ENCODE measurements at regions of chr19 and their contacts with region 1.

Region 1: DNA sequence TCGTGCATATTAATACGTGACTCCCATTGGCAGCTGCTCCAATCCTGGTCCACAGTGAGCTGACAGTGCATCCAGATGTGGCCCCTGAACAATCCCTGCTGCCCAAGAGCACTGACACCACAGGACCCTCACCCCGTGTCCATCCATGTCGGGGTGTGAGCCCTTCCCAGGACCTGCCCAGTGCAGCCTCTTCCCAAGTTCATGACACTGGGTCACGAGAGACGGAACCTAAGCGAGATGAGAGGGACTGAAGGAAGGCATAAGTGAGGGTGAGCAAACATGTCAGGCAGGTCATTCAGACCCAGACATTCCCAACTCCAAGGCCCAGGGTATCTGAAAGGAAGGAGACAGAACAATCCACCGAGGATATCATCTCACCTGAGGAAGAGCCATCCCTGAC is 3.5 kb downstream of the ZNF468 start:
- DNase-seq: no peak
- H3K4me3 ChIP-seq: no peak overlapping the region
- H3K27ac ChIP-seq: no peak overlapping the region
- H3K4me1 ChIP-seq: peaks cover 3% of the 10 kb centered on the region
- H3K27me3 ChIP-seq: no peaks in the 10 kb centered on the region
- CTCF ChIP-seq: no peak
- POLR2A ChIP-seq: no peak

Region 2: GRCh38 chr19:52554216-52554971 is 299.5 kb before region 1 on chr19:
- CTCF ChIA-PET with region 1: no interaction called
- POLR2A ChIA-PET with region 1: no interaction called
- dilution Hi-C with region 1: no loop called
- intact Hi-C with region 1: no loop called
- DNase-seq: no peak
- H3K4me3 ChIP-seq: no peak overlapping the region
- H3K27ac ChIP-seq: no peak overlapping the region
- H3K4me1 ChIP-seq: no peaks in the 10 kb centered on the region
- H3K27me3 ChIP-seq: no peaks in the 10 kb centered on the region
- CTCF ChIP-seq: no peak
- POLR2A ChIP-seq: no peak

Region 3: GRCh38 chr19:52823676-52824075 is 30.2 kb before region 1 on chr19:
- CTCF ChIA-PET with region 1: interaction called, 4 read pairs
- POLR2A ChIA-PET with region 1: no interaction called
- dilution Hi-C with region 1: no loop called
- intact Hi-C with region 1: loop called (anchors 1 kb)
- DNase-seq: no peak
- H3K4me3 ChIP-seq: no peak overlapping the region
- H3K27ac ChIP-seq: no peak overlapping the region
- H3K4me1 ChIP-seq: no peaks in the 10 kb centered on the region
- H3K27me3 ChIP-seq: no peaks in the 10 kb centered on the region
- CTCF ChIP-seq: no peak
- POLR2A ChIP-seq: no peak

Region 4: GRCh38 chr19:52871446-52872120 is 17.7 kb after region 1 on chr19:
- CTCF ChIA-PET with region 1: no interaction called
- POLR2A ChIA-PET with region 1: no interaction called
- dilution Hi-C with region 1: no loop called
- intact Hi-C with region 1: no loop called
- DNase-seq: no peak
- H3K4me3 ChIP-seq: no peak overlapping the region
- H3K27ac ChIP-seq: no peak overlapping the region
- H3K4me1 ChIP-seq: no peaks in the 10 kb centered on the region
- H3K27me3 ChIP-seq: no peaks in the 10 kb centered on the region
- CTCF ChIP-seq: no peak
- POLR2A ChIP-seq: no peak